ENCODE measurements at regions of chr4 and their contacts with region 1.

Region 1: GRCh38 chr4:140829825-140830224 is 73.6 kb upstream of the TBC1D9 start:
- DNase-seq: peak; percentile 69
- ATAC-seq: peak; percentile 83
- H3K4me3 ChIP-seq: peak overlapping the region in 1 of 5 experiments; percentile 25
- H3K4me3 Mint-ChIP-seq: peak overlapping the region; percentile 38
- H3K27ac ChIP-seq: peak overlapping the region; percentile 82
- H3K27ac Mint-ChIP-seq: peak overlapping the region; percentile 91
- H3K4me1 ChIP-seq: peaks cover 56 to 62% of the 10 kb centered on the region in 2 donors
- H3K4me1 Mint-ChIP-seq: peaks cover 81% of the 10 kb centered on the region
- H3K27me3 ChIP-seq: no peaks in the 10 kb centered on the region
- H3K27me3 Mint-ChIP-seq: no peaks in the 10 kb centered on the region
- CTCF ChIP-seq: no peak

Region 2: DNA sequence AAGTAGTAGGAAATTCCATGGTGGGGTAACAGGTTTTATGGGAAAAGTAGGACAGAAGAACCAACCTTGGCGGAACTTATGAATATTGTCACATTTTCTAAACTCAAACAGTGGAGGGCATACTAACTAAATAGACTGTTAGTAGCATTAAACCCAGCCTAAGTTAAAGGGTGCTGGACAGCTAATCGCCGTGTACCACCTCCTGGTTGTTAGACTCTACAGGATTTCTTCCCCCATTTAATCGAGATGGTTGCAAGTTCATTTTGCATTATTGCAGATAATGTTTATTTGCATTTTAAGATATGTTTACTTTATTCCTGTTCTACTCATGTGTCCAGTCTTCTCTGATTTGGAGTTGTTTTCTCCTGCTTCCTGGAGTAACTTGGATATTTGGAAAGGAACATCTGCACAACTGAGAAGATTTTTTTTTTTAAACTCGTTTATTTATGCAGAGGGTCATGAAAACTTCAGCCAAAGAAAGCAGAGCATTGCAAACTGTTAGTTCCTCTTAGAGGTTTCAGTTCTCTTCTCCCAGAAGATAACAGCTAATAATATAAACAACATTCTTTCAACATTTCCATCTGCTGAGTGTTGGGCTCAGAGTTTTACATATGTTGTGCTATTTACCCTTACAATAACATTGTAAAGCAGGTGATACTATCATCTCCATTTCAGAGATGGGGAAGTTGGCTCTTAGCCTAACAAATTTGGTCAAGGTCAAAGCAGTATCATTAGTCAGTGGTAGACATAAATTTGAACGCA is 22.2 kb before region 1 on chr4:
- CTCF ChIA-PET with region 1: interaction called, 5 read pairs
- POLR2A ChIA-PET with region 1: interaction called, 6 read pairs
- intact Hi-C with region 1: loop called (anchors 2 kb)
- DNase-seq: peak; percentile 80
- ATAC-seq: peak; percentile 84
- H3K4me3 ChIP-seq: peak overlapping the region in 2 of 5 experiments; percentile 10 to 50
- H3K4me3 Mint-ChIP-seq: peak overlapping the region; percentile 70
- H3K27ac ChIP-seq: peak overlapping the region; percentile 82 to 83
- H3K27ac Mint-ChIP-seq: peak overlapping the region; percentile 97
- H3K4me1 ChIP-seq: peaks cover 85 to 92% of the 10 kb centered on the region in 2 donors
- H3K4me1 Mint-ChIP-seq: peaks cover 83% of the 10 kb centered on the region
- H3K27me3 ChIP-seq: no peaks in the 10 kb centered on the region
- H3K27me3 Mint-ChIP-seq: no peaks in the 10 kb centered on the region
- CTCF ChIP-seq: no peak

Region 3: GRCh38 chr4:140819610-140820009 is 10.2 kb before region 1 on chr4:
- CTCF ChIA-PET with region 1: interaction called, 6 read pairs
- POLR2A ChIA-PET with region 1: interaction called, 3 read pairs
- intact Hi-C with region 1: loop called (anchors 2 kb)
- DNase-seq: no peak
- ATAC-seq: no peak
- H3K4me3 ChIP-seq: no peak overlapping the region
- H3K4me3 Mint-ChIP-seq: no peak overlapping the region
- H3K27ac ChIP-seq: no peak overlapping the region
- H3K27ac Mint-ChIP-seq: peak overlapping the region; percentile 11
- H3K4me1 ChIP-seq: no peaks in the 10 kb centered on the region
- H3K4me1 Mint-ChIP-seq: peaks cover 20% of the 10 kb centered on the region
- H3K27me3 ChIP-seq: no peaks in the 10 kb centered on the region
- H3K27me3 Mint-ChIP-seq: no peaks in the 10 kb centered on the region
- CTCF ChIP-seq: no peak

Measured in B cell (primary cell).